Dendritic cell treated with granulocyte-macrophage colony-stimulating factor and Interleukin-4, amounts not matched to agents 40 ng/mL and 50 ng/mL, for 4 days (primary cell): ENCODE measurements at regions of chr11 and their contacts with region 1.

Region 1: GRCh38 chr11:124673333-124674167 is at the starts of genes SIAE and SPA17:
- H3K4me3 Mint-ChIP-seq: peak within 1 kb of the TSS; percentile 86
- H3K27ac Mint-ChIP-seq: peak within 1 kb of the TSS; percentile 93
- H3K4me1 Mint-ChIP-seq: peaks cover 36% of the 10 kb centered on the region
- H3K27me3 Mint-ChIP-seq: no peaks in the 10 kb centered on the region

Region 2: GRCh38 chr11:124470516-124471227 is 202.9 kb before region 1 on chr11:
- intact Hi-C with region 1: no loop called
- H3K4me3 Mint-ChIP-seq: no peak overlapping the region
- H3K27ac Mint-ChIP-seq: no peak overlapping the region
- H3K4me1 Mint-ChIP-seq: peaks cover 10% of the 10 kb centered on the region
- H3K27me3 Mint-ChIP-seq: peaks cover 13% of the 10 kb centered on the region

Region 3: GRCh38 chr11:124746621-124747243 is 73.2 kb after region 1 on chr11:
- intact Hi-C with region 1: loop called (anchors 5 kb)
- H3K4me3 Mint-ChIP-seq: peak overlapping the region; percentile 81
- H3K27ac Mint-ChIP-seq: peak overlapping the region; percentile 82
- H3K4me1 Mint-ChIP-seq: peaks cover 71% of the 10 kb centered on the region
- H3K27me3 Mint-ChIP-seq: no peaks in the 10 kb centered on the region

Region 4: DNA sequence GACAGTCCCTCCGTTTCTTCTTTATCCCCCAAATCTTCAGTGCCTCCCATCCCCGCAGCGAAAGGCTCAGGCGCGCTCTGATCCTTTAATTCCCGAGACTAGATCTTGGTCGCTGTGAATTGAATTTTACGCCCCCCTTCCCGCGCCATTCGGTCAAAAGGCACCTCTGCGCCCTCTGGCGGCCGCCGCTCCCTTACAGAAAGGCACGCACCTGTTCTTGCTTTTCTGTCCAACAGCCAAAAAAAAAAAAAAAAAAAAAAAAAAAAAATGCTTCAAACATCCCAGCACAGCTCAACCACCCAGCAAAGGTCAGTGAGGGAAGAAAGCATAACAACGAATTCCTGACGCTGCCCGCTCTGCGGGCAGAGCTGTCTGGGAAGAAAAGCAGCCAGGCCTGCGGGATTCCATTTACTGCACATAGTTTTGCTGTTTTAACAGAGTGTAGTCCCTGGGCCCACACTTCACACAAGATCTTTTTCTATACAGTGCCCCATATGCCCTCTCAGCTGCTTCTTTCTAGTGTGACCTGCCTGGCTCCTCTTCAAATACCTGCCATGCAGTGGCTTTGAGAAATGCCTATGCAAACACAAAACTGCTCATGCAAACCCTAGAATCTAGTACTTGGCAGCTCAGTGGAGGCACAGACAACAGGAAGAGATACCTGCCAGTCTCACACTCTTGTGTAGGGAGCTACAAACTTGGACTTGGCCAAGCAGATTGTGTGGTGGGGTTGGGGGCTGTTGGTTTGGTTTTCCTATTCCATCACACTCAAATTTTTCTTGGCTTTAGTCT is 89.8 kb after region 1 on chr11:
- intact Hi-C with region 1: loop called (anchors 1 kb)
- H3K4me3 Mint-ChIP-seq: peak overlapping the region; percentile 96
- H3K27ac Mint-ChIP-seq: peak overlapping the region; percentile 42
- H3K4me1 Mint-ChIP-seq: peaks cover 45% of the 10 kb centered on the region
- H3K27me3 Mint-ChIP-seq: peaks cover 45% of the 10 kb centered on the region

Region 5: DNA sequence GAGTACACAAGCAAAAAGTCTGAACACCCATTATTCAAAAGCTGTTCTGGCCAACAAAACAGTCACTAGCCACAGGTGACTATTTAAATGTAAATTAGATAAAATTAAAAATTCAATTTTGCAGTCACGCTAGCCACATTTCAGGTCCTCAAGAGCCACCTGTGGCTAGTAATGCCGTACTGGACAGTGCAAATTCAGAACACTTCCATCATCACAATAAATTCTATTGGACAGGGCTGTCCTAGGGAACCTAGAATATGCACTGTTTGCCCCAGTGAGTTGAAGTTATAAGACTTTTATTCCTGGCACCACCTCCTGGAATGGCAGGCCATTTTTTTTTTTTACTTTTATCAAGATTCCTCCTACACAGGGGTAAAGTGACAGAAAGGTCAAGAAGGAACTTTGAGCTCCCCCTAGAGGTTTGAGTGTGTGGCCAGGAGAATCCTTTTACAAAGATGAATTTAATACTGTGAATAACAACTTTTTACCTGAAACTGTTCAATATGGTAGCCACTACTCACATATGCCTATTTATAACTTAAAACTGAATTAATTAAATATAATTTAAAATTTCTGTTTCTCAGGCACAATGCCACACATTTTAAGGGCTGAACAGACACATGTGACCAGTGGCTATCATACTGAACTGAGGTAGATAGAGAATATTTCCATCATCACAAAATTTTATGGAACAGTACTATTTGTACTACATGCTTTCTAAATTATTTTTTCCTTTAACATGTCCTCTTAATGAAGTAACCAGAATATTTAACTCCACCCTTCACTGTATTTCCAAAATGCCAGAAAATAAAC is 120.1 kb after region 1 on chr11:
- intact Hi-C with region 1: loop called (anchors 1 kb)
- H3K4me3 Mint-ChIP-seq: no peak overlapping the region
- H3K27ac Mint-ChIP-seq: no peak overlapping the region
- H3K4me1 Mint-ChIP-seq: peaks cover 16% of the 10 kb centered on the region
- H3K27me3 Mint-ChIP-seq: peaks cover 2% of the 10 kb centered on the region

Region 6: GRCh38 chr11:124800226-124800929 is 126.8 kb after region 1 on chr11 and contains the start of gene MSANTD2:
- intact Hi-C with region 1: loop called (anchors 1 kb)
- H3K4me3 Mint-ChIP-seq: peak within 1 kb of the TSS; percentile 93
- H3K27ac Mint-ChIP-seq: peak within 1 kb of the TSS; percentile 94
- H3K4me1 Mint-ChIP-seq: peaks cover 16% of the 10 kb centered on the region
- H3K27me3 Mint-ChIP-seq: peaks cover 28% of the 10 kb centered on the region

Region 7: DNA sequence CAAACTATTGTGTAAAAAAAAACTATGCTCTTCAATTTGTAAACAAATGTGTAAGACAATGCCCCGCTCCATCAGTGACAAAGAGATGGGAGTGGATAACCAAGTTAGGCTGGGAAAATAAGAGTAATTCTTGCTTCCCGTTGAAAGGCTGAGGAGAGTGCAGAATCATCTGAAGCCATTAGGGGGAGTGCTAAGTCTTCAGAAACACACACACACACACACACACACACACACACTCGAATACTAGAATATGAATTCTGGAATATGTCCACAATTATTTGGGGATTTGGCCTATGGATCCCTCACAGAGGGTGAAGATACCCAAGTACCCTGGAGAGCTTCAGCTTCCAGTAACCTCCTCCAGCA is 163.9 kb after region 1 on chr11:
- intact Hi-C with region 1: loop called (anchors 1 kb)
- H3K4me3 Mint-ChIP-seq: no peak overlapping the region
- H3K27ac Mint-ChIP-seq: no peak overlapping the region
- H3K4me1 Mint-ChIP-seq: peaks cover 10% of the 10 kb centered on the region
- H3K27me3 Mint-ChIP-seq: peaks cover 78% of the 10 kb centered on the region

Region 8: DNA sequence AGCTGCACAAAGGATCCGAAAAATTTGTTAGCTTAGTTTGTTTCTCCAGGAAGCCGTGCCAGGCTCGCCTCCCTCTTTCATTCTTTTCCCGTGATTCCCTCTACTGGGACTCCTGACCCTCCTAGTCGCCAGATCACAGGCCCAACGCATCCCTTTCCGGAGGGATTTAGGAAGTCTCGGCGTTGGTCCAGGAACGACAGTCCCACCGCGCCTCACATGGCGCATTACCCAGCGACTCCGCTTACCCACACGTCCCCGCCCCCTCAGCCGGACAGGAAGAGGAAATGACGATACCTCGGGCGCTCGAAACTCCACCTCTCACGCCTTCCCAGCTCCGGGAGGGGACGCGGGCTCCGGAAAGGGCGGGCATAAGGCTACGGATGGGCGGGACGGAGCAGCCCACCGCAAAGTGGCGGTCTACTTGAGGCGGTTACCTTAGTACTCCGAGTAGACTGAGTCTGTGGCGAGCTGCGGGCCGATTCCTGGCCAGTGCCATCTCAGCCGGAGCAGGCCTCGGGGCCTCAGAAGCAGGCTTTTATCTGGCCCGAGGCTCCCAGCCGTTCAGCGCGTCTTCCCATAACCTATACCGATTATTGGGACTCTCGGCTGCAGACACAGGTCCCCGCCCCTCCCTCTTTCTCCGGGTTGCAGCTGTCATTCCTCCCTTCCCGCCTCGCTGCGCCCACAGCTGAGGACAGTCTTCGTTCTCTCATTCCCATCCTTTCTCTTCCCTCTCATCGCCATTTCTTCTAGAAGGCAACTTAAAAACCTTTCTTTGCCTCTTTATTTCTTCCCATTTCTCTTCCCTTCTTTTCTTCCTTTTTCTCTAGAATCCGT is 280.4 kb after region 1 on chr11 and contains the start of gene CCDC15:
- intact Hi-C with region 1: loop called (anchors 5 kb)
- H3K4me3 Mint-ChIP-seq: no peak within 1 kb of the TSS
- H3K27ac Mint-ChIP-seq: no peak within 1 kb of the TSS
- H3K4me1 Mint-ChIP-seq: no peaks in the 10 kb centered on the region
- H3K27me3 Mint-ChIP-seq: peaks cover 2% of the 10 kb centered on the region